Activated CD8-positive, alpha-beta T cell treated with anti-CD3 and anti-CD28 coated beads, Interleukin-2, amount 10 ng/mL, durations not matched to agents 7 days and 5 days (primary cell): ENCODE measurements at regions of chr22 and their contacts with region 1.

Region 1: DNA sequence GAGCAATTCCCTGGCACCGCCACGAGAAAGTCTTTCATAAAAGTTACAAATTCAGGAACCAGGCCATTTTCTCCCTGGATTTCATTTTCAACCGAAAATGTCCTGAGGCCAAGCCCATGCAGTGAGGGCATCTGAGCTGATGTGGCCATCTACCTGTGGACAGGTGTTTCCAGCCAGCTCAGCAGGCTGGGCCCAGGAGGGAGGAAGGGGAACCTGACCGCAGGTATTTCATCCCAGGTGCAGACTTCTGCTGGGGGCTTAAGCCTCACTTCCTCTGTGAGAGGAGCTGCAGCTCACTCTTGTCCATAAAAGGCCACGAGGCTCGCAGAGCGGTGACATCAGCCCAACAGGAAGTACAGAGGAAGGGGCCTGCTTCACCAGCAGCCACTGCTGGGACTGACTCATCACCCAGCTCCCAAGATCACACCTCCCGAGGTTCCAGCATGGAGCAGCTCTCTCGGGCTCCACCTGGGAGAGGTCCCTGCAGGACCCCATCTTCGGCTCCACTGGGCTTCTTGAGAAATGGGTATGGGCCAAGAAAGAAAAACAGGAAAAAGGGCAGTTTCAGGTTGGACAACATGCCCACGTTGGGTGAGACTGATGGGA is 56.4 kb downstream of the MYH9 start:
- DNase-seq: peak; percentile 91
- ATAC-seq: peak; percentile 59
- H3K4me3 Mint-ChIP-seq: peak overlapping the region; percentile 85
- H3K27ac Mint-ChIP-seq: peak overlapping the region; percentile 99
- H3K4me1 Mint-ChIP-seq: peaks cover 99% of the 10 kb centered on the region
- H3K27me3 Mint-ChIP-seq: no peaks in the 10 kb centered on the region

Region 2: GRCh38 chr22:36166518-36167220 is 164.7 kb before region 1 on chr22:
- CTCF ChIA-PET with region 1: no interaction called
- POLR2A ChIA-PET with region 1: no interaction called
- DNase-seq: peak; percentile 77
- ATAC-seq: peak; percentile 59
- H3K4me3 Mint-ChIP-seq: peak overlapping the region; percentile 26
- H3K27ac Mint-ChIP-seq: peak overlapping the region; percentile 75
- H3K4me1 Mint-ChIP-seq: peaks cover 64% of the 10 kb centered on the region
- H3K27me3 Mint-ChIP-seq: peaks cover under 1% of the 10 kb centered on the region

Region 3: DNA sequence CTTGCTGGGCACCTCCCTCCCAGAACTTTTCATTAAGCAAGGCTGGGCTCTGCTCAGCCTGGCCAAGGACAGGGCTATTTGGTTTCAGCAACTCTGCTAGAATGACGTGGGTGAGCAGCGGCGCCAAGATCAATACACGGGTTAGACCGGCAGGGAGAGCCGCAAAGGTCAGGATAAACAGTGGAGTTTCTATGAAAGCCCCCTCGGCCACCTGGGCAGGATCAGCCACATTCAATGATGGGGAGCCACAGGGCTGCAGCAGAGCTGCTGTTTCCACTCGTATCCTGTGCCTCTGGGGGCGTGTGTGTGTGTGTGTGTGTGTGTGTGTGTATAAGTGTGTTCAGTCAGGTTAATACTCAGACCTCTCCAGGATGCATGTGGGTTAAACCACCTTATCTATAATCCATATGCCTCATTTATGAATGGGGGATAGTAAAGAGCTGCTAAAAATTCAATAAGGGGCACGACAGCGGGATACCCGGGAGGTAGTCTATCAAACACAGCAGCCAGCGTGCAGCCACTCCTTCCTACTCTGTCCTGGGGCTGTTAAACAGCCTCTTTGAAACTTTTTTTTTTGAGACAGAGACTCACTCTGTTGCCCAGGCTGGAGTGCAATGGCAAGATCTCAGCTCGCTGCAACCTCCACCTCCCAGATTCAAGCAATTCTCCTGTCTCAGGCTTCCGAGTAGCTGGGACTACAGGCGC is 21.5 kb after region 1 on chr22:
- CTCF ChIA-PET with region 1: interaction called, 12 read pairs
- POLR2A ChIA-PET with region 1: interaction called, 14 read pairs
- DNase-seq: peak; percentile 74
- ATAC-seq: peak; percentile 31
- H3K4me3 Mint-ChIP-seq: peak overlapping the region; percentile 36
- H3K27ac Mint-ChIP-seq: peak overlapping the region; percentile 86
- H3K4me1 Mint-ChIP-seq: peaks cover 87% of the 10 kb centered on the region
- H3K27me3 Mint-ChIP-seq: no peaks in the 10 kb centered on the region

Region 4: GRCh38 chr22:36365020-36365411 is 33.6 kb after region 1 on chr22:
- CTCF ChIA-PET with region 1: interaction called, 20 read pairs
- POLR2A ChIA-PET with region 1: interaction called, 17 read pairs
- DNase-seq: peak; percentile 93
- ATAC-seq: peak; percentile 84
- H3K4me3 Mint-ChIP-seq: peak overlapping the region; percentile 52
- H3K27ac Mint-ChIP-seq: peak overlapping the region; percentile 88
- H3K4me1 Mint-ChIP-seq: peaks cover 97% of the 10 kb centered on the region
- H3K27me3 Mint-ChIP-seq: no peaks in the 10 kb centered on the region

Region 5: GRCh38 chr22:36379593-36380361 is 48.4 kb after region 1 on chr22:
- CTCF ChIA-PET with region 1: interaction called, 50 read pairs
- POLR2A ChIA-PET with region 1: interaction called, 60 read pairs
- DNase-seq: peak; percentile 80
- ATAC-seq: peak; percentile 61
- H3K4me3 Mint-ChIP-seq: peak overlapping the region; percentile 78
- H3K27ac Mint-ChIP-seq: peak overlapping the region; percentile 98
- H3K4me1 Mint-ChIP-seq: peaks cover 93% of the 10 kb centered on the region
- H3K27me3 Mint-ChIP-seq: no peaks in the 10 kb centered on the region

Region 6: DNA sequence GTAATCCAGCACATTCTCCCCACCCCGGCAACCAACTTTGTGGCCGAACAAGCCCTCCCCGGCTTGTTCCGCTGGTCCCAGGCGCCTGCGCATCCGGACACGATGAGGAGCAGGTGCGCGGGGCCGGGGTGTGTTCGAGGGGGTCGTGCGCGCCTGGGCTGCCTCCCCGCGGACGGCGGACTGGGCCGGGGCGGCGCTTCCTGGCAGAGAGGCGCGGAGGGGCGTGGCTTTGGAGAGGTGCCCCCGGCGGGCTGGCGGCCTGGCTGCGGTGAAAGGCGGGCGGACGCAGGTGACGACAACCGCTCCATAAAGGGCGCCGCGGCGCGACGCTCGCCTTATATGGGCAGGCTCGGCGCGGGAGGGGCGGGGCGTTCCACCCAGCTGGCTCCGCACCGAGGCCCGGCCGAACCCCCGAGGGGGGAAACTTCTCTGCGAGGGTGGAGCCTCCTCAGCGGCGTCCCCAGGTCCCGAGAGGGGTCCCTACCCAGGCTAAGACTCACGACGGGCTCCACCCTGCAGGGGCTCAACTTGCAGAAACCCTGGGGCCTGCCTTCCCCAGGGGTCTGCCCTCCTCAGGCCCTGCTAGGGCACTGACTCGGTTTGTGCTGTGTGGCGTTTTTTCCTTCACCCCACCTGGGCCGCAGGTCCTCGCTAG is 123.6 kb after region 1 on chr22:
- CTCF ChIA-PET with region 1: interaction called, 11 read pairs
- POLR2A ChIA-PET with region 1: interaction called, 10 read pairs
- DNase-seq: peak; percentile 98
- ATAC-seq: peak; percentile 78
- H3K4me3 Mint-ChIP-seq: peak overlapping the region; percentile 70
- H3K27ac Mint-ChIP-seq: peak overlapping the region; percentile 79
- H3K4me1 Mint-ChIP-seq: peaks cover 62% of the 10 kb centered on the region
- H3K27me3 Mint-ChIP-seq: no peaks in the 10 kb centered on the region